Ascending aorta (tissue), 2 donors: ENCODE measurements at regions of chr1 and their contacts with region 1.

Region 1: DNA sequence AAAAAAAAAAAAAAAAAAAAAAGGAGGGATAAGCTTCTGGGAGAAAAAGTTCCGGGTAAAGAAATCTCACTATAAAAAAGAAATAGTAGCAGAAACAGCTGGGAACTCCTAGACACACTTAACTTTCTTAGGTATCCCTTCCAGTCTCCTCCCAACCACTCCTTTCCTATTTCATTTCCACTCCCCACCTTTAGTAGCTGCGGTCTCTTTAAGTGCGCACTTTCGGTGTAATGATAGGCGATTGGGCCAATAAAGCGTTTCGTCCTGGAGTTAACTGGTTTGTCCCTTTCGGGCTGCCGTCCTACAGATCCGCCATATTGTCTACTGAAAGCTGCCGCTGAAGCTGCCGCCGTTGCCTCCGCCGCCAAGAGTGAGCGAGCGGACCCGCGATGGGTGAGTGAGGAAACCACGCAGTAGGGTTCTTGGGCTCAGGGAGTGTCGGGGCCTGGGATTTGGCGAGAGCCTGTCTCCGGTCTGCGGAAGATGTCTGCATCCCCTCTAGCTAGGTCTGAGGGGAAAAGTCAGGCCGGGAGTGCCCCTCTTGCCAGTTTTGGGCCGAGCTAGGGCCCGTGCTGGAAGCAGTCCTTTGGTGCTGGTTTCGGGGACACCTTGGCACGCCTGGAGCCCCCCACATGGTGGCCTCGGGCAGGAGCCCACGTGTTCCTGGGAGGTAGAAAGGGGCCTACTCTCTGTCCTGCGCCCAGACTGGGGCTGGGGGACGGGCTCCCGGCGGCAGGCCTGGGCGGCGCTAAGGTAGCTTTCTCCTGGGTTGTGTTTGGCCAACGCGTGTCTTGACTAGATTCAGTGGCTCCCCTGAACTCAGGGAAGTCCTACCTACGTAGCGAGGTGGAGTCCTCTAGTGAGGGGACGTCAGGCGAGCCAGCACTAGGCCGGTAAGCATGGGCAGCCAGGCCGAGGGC is at the start of gene KPNA6:
- DNase-seq: peak; percentile 55 to 95
- H3K4me3 ChIP-seq: peak within 1 kb of the TSS; percentile 80 to 92
- H3K27ac ChIP-seq: peak within 1 kb of the TSS; percentile 87 to 92
- H3K4me1 ChIP-seq: peaks cover 4 to 38% of the 10 kb centered on the region in 2 donors
- H3K27me3 ChIP-seq: no peaks in the 10 kb centered on the region
- CTCF ChIP-seq: peak in 1 of 3 experiments; percentile 5
- total RNA-seq, gene KPNA6: 26.1 TPM

Region 2: DNA sequence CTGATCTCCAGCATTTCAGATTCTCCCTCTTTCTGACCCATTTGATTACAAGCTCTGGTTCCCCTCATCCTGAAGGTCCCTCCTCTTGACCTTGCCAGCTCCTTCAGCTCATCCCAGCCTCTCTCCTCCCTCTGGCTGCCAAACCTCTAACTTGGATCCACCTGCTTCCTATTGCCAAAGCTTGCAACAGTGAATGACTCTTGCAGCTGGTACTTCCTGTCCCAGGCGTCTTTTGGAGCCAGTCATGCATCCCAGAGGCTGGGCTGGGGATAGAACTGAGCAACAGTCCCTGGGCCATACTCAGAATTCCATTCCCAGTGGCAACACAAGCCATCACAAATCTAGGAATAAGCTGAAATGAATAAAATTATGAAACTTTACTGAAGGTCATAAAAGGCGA is 264.5 kb before region 1 on chr1:
- intact Hi-C with region 1: no loop called
- DNase-seq: peak; percentile 10 to 76
- H3K4me3 ChIP-seq: no peak overlapping the region
- H3K27ac ChIP-seq: peak overlapping the region; percentile 6 to 25
- H3K4me1 ChIP-seq: peaks cover 0 to 4% of the 10 kb centered on the region in 2 donors
- H3K27me3 ChIP-seq: no peaks in the 10 kb centered on the region
- CTCF ChIP-seq: no peak

Region 3: GRCh38 chr1:32072622-32073298 is 35.2 kb before region 1 on chr1 and contains the start of gene TMEM39B:
- intact Hi-C with region 1: loop called (anchors 2 kb)
- DNase-seq: peak; percentile 84 to 98
- H3K4me3 ChIP-seq: peak within 1 kb of the TSS; percentile 75
- H3K27ac ChIP-seq: peak within 1 kb of the TSS; percentile 83 to 89
- H3K4me1 ChIP-seq: peaks cover 13 to 15% of the 10 kb centered on the region in 2 donors
- H3K27me3 ChIP-seq: no peaks in the 10 kb centered on the region
- CTCF ChIP-seq: peak in 2 of 3 experiments; percentile 13 to 22
- total RNA-seq, gene TMEM39B: 2.6 TPM